AG04449 (cell line): ENCODE measurements at regions of chr17 and their contacts with region 1.

Region 1: GRCh38 chr17:50865984-50866774 is at the start of gene TOB1:
- DNase-seq: peak; percentile 72
- H3K4me3 ChIP-seq: peak within 1 kb of the TSS; percentile 92
- CTCF ChIP-seq: no peak

Region 2: DNA sequence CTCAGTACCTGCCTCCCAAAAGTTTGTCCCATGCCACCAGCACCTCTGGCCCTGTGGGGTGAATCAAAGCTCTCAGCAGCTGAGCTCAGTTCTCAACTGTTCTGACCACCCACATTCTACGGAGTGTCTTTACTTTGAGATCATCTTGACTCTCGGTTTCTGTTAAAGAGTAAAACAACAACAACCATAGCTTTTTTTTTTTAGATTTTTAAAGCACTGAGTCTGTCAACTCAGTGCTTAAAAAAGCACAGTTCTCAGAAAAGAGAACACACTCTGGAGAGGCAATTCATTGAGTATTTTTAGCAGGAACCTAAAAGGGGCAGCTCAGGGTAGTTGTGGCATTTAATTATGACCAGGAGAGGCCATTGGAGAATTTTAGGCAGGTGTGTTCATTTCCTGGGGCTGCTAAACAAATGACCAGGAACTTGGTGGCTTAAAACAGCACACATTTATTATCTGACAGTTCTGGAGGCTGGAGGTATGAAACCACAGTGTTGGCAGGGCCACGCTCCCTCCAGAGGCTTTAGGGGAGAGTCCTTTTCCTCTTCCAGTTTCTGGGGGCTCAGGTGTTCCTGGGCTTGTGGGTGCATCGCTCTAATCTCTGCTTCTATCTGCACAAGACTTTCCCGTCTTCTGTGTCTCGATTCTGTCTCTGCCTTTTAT is 37.5 kb before region 1 on chr17:
- CTCF ChIA-PET with region 1: no interaction called
- POLR2A ChIA-PET with region 1: interaction called, 12 read pairs
- DNase-seq: no peak
- H3K4me3 ChIP-seq: no peak overlapping the region
- CTCF ChIP-seq: no peak

Region 3: DNA sequence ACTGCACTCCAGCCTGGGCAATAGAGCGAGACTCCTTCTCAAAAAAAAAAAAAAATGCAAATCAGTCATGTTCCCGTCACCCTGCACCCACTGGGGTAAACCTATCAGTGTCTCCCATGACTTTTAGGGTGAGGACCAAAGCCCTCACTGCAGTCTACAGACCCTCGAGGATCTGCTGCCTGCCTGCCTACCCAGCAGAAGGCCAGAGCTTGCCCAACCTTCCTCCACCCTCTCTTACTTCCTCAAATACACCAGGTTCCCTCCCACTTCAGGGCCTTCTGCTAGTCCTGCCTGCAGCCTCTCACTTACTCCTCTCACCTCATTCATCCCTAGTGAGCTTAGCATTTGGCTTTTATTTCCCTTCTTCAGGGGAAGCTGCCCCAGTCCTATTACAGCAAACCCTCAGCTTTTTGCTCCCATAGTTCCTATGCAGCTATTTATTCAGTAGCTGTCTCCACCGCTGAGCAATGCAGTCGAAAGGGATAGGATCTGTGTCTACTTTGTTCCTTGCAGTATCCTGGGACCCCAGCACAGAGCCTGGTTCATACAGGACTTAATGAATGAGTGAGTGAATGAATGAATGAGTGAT is 17.8 kb after region 1 on chr17:
- CTCF ChIA-PET with region 1: no interaction called
- POLR2A ChIA-PET with region 1: interaction called, 10 read pairs
- DNase-seq: no peak
- H3K4me3 ChIP-seq: no peak overlapping the region
- CTCF ChIP-seq: no peak

Region 4: GRCh38 chr17:50931144-50931908 is 65.1 kb after region 1 on chr17:
- CTCF ChIA-PET with region 1: interaction called, 3 read pairs
- POLR2A ChIA-PET with region 1: interaction called, 44 read pairs
- DNase-seq: no peak
- H3K4me3 ChIP-seq: peak overlapping the region; percentile 42
- CTCF ChIP-seq: no peak

Region 5: DNA sequence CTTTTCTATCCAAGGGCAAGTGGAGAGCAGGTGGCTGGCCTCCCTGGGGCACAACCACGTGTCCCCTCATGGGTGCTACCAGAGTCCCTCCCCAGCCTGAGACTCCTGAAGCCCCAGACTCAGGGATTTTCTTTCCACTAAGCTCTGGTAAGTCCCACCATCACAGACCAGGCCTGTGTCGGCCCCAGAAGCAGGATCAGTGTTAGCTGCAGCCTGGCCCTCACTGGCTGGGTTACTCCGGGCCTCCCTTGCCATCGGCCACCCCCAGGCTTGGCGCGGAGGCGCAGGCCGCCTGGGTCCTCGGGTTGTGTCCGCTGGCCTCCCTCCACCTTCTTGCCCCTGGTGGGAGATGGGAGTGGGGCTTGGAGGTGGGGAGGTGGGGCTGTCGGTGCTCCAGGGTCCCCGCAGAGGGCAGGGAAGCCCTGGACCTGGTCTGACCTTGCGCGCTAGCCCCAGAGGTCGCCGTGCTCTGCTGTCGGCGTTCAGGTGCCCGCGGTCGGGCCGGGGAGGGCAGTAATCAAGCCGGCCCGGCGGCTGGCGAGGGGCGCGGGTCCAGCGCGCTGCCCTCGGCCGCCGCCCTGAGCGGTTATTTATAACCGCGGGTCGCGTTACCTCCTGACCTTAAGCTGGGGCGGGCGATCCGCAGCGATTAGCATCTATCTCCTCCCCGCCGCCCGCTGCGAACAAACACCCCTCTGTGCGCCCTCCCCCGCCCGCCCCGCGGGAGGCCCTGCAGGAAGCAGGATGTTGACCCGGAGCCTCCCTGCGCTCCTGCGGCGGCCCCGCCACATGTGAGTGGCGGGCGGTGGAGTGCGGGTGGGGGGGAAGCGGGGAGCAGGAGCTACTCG is 78.1 kb after region 1 on chr17:
- CTCF ChIA-PET with region 1: interaction called, 758 read pairs
- POLR2A ChIA-PET with region 1: interaction called, 126 read pairs
- DNase-seq: no peak
- H3K4me3 ChIP-seq: peak overlapping the region; percentile 47
- CTCF ChIP-seq: no peak

Region 6: DNA sequence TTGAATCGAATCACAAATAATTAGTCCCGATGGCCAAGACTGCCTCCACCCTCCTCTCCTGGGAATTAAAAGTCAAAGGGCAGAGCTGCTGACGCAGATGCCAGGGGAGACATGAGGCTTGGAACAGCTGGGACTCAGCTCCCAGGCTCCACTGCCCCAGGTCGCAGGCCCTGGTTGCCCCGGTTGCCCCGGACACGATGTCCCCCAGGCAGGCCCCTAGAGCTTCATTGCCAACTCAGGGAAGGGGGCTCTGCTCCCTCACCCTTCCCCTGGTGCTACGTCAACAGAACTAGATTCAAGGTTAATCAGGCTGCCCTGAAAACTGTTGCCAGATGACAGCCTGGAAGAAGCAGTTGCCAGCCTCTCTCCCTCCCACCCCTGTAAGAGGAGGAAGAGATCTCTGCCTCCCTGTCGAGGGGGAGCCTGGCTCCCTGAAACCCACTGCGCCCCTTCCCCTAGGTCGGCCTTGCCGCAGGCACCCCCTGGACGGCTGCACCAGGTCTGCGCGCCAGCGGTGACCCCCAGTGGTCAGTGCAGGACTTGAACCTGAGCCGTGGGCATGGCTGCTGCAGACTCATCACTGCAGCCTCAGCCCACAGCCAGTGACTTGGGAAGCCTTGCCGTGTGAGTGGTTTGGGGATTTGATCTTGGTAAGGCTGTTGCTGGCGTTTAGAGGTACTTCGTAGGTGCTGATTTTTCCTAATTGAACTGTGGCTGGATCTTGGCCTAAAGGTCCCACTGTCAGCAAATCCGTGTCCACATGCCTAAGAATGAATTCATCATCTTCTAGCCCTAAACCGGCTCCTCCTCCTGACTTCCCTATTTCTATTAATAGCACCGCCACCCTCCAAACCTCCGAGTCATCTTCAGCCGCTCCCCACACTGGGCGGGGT is 84.1 kb after region 1 on chr17:
- CTCF ChIA-PET with region 1: interaction called, 758 read pairs
- POLR2A ChIA-PET with region 1: interaction called, 126 read pairs
- DNase-seq: peak; percentile 63
- H3K4me3 ChIP-seq: peak overlapping the region; percentile 23; the same call in 1 of the 2 replicates
- CTCF ChIP-seq: peak; percentile 79

Region 7: DNA sequence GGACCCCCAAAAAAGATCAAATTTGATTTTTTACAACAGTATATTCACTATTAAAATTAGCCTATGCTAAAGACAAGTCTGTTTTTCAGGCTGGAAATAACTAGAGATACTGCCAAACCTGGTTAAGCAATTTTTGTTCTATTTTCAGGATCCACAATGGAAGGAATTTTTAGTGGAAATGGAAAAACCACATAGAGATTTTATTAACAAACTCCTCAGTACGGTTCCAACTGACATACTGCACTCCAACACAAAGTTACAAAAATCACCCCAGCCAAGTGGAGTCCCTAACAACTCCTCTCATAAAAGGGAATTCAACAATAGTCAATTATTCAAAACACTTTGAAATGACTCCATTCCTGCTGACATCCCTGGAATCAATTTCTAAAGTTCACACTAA is 101.6 kb after region 1 on chr17:
- CTCF ChIA-PET with region 1: interaction called, 4 read pairs
- POLR2A ChIA-PET with region 1: interaction called, 18 read pairs
- DNase-seq: no peak
- H3K4me3 ChIP-seq: no peak overlapping the region
- CTCF ChIP-seq: no peak

Region 8: GRCh38 chr17:51487947-51488346 is 621.8 kb after region 1 on chr17:
- CTCF ChIA-PET with region 1: no interaction called
- POLR2A ChIA-PET with region 1: no interaction called
- DNase-seq: no peak
- H3K4me3 ChIP-seq: no peak overlapping the region
- CTCF ChIP-seq: no peak